Panc1 (cell line): ENCODE measurements at regions of chr7 and their contacts with region 1.

Region 1: GRCh38 chr7:20598459-20599309 is 16.8 kb upstream of the ABCB5 start:
- DNase-seq: peak; percentile 67
- ATAC-seq: peak; percentile 84
- H3K4me3 ChIP-seq: no peak overlapping the region
- H3K27ac ChIP-seq: no peak overlapping the region
- H3K4me1 ChIP-seq: no peaks in the 10 kb centered on the region
- H3K27me3 ChIP-seq: no peaks in the 10 kb centered on the region
- CTCF ChIP-seq: peak; percentile 80

Region 2: GRCh38 chr7:19713676-19714075 is 885.0 kb before region 1 on chr7:
- CTCF ChIA-PET with region 1: interaction called, 16 read pairs
- POLR2A ChIA-PET with region 1: no interaction called
- in situ Hi-C with region 1: no loop called
- intact Hi-C with region 1: loop called (anchors 1 kb)
- DNase-seq: peak; percentile 22
- ATAC-seq: no peak
- H3K4me3 ChIP-seq: no peak overlapping the region
- H3K27ac ChIP-seq: no peak overlapping the region
- H3K4me1 ChIP-seq: peaks cover 6% of the 10 kb centered on the region; the same call in 1 of the 2 replicates
- H3K27me3 ChIP-seq: peaks cover 3% of the 10 kb centered on the region; the same call in 1 of the 2 replicates
- CTCF ChIP-seq: peak; percentile 65; the same call in 1 of the 2 replicates

Region 3: GRCh38 chr7:19754521-19755116 is 844.1 kb before region 1 on chr7:
- CTCF ChIA-PET with region 1: interaction called, 4 read pairs
- POLR2A ChIA-PET with region 1: no interaction called
- in situ Hi-C with region 1: no loop called
- intact Hi-C with region 1: loop called (anchors 2 kb)
- DNase-seq: peak; percentile 58
- ATAC-seq: no peak
- H3K4me3 ChIP-seq: no peak overlapping the region
- H3K27ac ChIP-seq: no peak overlapping the region
- H3K4me1 ChIP-seq: no peaks in the 10 kb centered on the region
- H3K27me3 ChIP-seq: no peaks in the 10 kb centered on the region
- CTCF ChIP-seq: peak; percentile 81; the same call in 1 of the 2 replicates

Region 4: GRCh38 chr7:20577441-20578071 is 21.1 kb before region 1 on chr7:
- CTCF ChIA-PET with region 1: no interaction called
- POLR2A ChIA-PET with region 1: no interaction called
- in situ Hi-C with region 1: no loop called
- intact Hi-C with region 1: no loop called
- DNase-seq: no peak
- ATAC-seq: no peak
- H3K4me3 ChIP-seq: no peak overlapping the region
- H3K27ac ChIP-seq: no peak overlapping the region
- H3K4me1 ChIP-seq: no peaks in the 10 kb centered on the region
- H3K27me3 ChIP-seq: no peaks in the 10 kb centered on the region
- CTCF ChIP-seq: no peak

Region 5: DNA sequence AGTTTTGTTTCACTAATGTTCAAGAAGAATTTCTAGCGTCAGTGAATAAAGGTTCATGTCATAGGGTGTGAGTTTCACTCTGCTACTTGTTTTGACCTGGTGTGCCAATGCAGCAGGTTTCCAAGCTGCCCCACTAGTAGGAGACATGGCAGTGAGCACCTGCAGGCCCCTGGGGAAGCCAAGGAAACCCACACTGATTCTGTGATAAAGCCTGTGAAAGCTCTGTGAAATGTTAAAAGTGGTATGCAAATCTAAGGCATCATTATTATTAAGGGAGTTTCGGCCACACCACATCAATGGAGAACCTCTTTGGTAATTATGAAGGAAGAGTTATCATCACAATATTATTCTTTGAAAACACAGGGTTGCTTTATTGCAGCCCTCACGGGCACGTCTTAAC is 63.2 kb after region 1 on chr7:
- CTCF ChIA-PET with region 1: no interaction called
- POLR2A ChIA-PET with region 1: interaction called, 11 read pairs
- in situ Hi-C with region 1: no loop called
- intact Hi-C with region 1: no loop called
- DNase-seq: no peak
- ATAC-seq: no peak
- H3K4me3 ChIP-seq: no peak overlapping the region
- H3K27ac ChIP-seq: no peak overlapping the region
- H3K4me1 ChIP-seq: no peaks in the 10 kb centered on the region
- H3K27me3 ChIP-seq: no peaks in the 10 kb centered on the region
- CTCF ChIP-seq: no peak